HEK293T (cell line): ENCODE measurements at regions of chr9 and their contacts with region 1.

Region 1: GRCh38 chr9:72173081-72173480 is 23.8 kb downstream of the GDA start:
- DNase-seq: no peak

Region 2: DNA sequence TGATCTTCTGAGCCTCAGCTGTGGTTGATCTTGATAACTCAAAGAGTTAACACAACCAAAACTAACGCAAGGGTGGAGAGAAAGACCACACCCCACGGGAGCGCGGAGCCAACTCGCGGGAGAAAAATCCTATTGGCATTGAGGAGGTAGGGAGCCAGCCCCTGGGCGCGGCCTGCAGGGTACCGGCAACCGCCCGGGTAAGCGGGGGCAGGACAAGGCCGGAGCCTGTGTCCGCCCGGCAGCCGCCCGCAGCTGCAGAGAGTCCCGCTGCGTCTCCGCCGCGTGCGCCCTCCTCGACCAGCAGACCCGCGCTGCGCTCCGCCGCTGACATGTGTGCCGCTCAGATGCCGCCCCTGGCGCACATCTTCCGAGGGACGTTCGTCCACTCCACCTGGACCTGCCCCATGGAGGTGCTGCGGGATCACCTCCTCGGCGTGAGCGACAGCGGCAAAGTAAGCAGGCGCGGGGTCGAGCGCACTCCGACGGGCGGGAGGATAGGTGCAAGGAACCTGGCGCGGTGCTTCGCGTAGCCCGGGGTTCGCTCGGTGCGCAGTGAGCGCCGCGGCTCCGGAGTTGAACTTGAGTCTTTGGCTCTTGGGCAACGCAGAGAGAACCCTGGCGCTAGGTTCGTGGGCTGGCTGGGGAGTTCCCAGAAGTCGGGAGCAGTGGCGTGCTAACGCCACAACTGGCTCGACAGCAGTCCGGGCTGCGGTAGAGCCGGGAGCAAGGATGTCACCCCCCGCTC is 23.7 kb before region 1 on chr9 and contains the start of gene GDA:
- CTCF ChIA-PET with region 1: no interaction called
- POLR2A ChIA-PET with region 1: no interaction called
- DNase-seq: peak; percentile 12

Region 3: DNA sequence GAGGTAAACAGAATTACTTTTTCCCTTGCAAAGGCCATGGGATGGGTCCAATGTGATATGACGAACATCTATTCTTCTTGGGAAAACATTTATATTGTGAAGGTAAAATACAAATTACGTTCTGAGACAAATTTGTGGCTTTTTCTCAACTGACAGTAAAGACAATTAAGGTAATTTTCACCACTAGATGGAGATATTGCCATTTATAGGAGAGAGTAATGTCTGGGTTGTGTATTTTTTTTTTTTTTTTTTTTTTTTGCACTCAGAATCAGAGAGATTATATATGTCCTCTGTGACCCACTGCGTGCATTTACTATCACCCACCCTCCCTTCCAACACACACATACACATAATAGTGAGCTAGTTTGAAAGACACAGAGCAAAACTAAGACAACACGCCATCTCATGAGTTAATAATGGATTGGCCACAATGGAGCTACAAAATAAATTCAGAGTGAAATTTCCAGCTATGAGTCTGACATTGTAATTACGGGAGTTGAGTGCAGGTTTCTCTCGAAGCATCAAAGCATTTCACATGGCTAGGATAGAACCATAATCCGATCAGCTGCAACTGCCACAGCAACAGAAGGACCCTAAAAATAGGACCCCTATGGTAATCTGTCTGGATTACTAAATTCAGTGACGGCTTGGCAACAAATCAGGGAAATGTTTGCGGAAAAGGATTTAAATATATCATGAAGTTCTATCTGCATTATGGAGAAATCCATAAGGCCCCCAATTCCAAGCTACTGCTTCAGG is 1027.8 kb after region 1 on chr9:
- CTCF ChIA-PET with region 1: interaction called, 10 read pairs
- POLR2A ChIA-PET with region 1: no interaction called
- DNase-seq: peak; percentile 26